ENCODE measurements at regions of chr17 and their contacts with region 1.

Region 1: GRCh38 chr17:40443583-40444327 is 505 bp downstream of the IGFBP4 start:
- DNase-seq: peak in 6 of 7 donors; percentile 66 to 75 (median 72)
- H3K4me3 ChIP-seq: peak overlapping the region in 2 of 4 donors; percentile 32 to 60
- H3K27ac ChIP-seq: peak overlapping the region in 4 of 5 donors; percentile 64 to 97 (median 81)
- H3K4me1 ChIP-seq: peaks cover 0 to 28% of the 10 kb centered on the region in 2 donors
- H3K27me3 ChIP-seq: no peaks in the 10 kb centered on the region
- CTCF ChIP-seq: peak in 1 of 6 experiments; percentile 34
- POLR2A ChIP-seq: no peak

Region 2: DNA sequence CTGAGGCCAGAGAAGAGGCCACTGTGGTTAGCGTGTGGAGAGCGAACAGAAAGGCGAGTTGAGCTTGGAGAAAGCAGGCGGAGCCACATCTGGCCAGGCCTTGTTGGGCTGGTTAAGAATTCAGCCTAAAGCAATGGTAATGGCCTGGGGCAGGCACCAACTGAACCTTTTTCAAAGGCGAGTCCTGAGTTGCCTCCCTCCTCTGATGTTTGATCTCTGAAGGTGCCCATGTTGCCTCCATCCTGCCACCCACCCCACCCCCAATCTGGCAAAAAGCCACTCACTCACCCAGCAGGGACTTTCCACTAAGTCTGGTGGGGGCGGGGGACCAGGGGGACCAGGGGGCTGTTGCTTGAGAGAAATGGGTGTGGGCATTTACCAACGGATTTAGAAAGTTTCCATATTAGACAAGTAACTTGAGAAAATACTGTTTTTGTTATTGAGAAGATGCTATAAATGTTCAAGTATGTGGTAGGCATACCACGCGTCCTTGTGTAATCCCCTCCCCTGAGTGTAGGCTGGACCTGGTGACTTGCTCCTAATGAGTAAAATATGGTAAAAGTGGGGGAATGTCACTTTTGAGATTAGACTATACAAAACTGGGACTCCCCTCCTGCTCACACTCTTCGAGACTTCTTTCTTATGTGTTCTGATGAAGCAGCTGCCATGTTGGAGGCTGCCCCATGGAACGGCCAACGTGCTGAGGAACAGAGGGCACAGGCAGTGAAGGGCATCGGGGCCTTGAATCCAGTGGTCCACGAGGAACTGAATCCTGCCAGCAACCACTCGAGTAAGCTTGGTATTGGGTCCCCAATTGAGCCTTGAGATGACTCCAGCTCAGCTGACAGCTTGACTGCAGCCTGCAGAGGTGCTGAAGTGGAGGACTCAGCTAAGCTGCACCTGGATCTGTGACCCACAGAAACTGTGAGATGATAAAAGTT is 87.6 kb after region 1 on chr17:
- intact Hi-C with region 1: loop called (anchors 2 to 5 kb)
- DNase-seq: peak in 2 of 7 donors; percentile 5 to 25
- H3K4me3 ChIP-seq: no peak overlapping the region
- H3K27ac ChIP-seq: no peak overlapping the region
- H3K4me1 ChIP-seq: peaks cover 0 to 10% of the 10 kb centered on the region in 2 donors
- H3K27me3 ChIP-seq: no peaks in the 10 kb centered on the region
- CTCF ChIP-seq: no peak
- POLR2A ChIP-seq: no peak

Region 3: GRCh38 chr17:40536295-40537171 is 92.8 kb after region 1 on chr17:
- intact Hi-C with region 1: loop called (anchors 2 to 5 kb)
- DNase-seq: peak in 3 of 7 donors; percentile 37 to 45 (median 41)
- H3K4me3 ChIP-seq: no peak overlapping the region
- H3K27ac ChIP-seq: peak overlapping the region in 4 of 5 donors; percentile 17 to 97 (median 54)
- H3K4me1 ChIP-seq: peaks cover 17 to 42% of the 10 kb centered on the region in 2 donors
- H3K27me3 ChIP-seq: no peaks in the 10 kb centered on the region
- CTCF ChIP-seq: no peak
- POLR2A ChIP-seq: no peak

Region 4: GRCh38 chr17:40559954-40560591 is 116.3 kb after region 1 on chr17:
- intact Hi-C with region 1: loop called (anchors 5 to 10 kb)
- DNase-seq: peak; percentile 86 to 97 (median 92)
- H3K4me3 ChIP-seq: peak overlapping the region in 1 of 4 donors; percentile 5
- H3K27ac ChIP-seq: peak overlapping the region in 2 of 5 donors; percentile 75 to 82
- H3K4me1 ChIP-seq: peaks cover 0 to 17% of the 10 kb centered on the region in 2 donors
- H3K27me3 ChIP-seq: no peaks in the 10 kb centered on the region
- CTCF ChIP-seq: peak; percentile 90 to 99 (median 98)
- POLR2A ChIP-seq: no peak